ENCODE measurements at regions of chr1 and their contacts with region 1.

Region 1: DNA sequence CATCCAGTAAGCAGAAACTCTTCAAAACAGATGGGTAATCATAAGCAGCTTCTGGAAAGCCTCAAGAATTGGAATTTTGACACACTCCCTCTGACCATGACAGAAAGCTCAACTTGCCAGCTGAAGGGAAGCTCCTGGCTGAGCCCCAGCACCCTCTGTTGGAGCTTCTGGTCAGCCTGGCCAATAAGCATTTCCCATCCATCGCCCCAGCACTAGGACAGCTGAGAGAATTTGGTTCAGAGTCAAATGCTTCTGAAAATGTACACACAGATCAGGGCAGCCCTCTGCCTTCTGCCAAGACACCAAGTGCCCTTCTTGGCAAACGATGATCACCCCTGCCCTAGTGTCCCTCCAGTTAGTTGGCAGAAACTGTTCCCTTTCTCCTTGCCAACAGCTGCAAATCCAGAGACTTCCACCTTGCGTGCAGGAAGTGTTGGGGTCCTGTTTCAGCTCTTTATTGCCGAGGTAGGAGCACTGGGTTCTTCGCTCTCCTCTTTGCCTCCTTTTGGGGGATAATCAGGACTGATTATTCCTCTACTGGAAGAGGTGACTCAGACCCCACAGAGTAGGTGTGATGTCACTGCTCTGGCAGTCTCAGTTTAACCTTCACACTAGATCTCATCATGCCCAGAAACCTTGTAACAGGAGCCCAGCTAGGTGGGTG is 11.9 kb downstream of the PIGV start:
- DNase-seq: peak; percentile 30
- H3K4me3 Mint-ChIP-seq: peak overlapping the region; percentile 52
- H3K27ac Mint-ChIP-seq: peak overlapping the region; percentile 89
- H3K4me1 Mint-ChIP-seq: peaks cover 55% of the 10 kb centered on the region
- H3K27me3 Mint-ChIP-seq: no peaks in the 10 kb centered on the region

Region 2: DNA sequence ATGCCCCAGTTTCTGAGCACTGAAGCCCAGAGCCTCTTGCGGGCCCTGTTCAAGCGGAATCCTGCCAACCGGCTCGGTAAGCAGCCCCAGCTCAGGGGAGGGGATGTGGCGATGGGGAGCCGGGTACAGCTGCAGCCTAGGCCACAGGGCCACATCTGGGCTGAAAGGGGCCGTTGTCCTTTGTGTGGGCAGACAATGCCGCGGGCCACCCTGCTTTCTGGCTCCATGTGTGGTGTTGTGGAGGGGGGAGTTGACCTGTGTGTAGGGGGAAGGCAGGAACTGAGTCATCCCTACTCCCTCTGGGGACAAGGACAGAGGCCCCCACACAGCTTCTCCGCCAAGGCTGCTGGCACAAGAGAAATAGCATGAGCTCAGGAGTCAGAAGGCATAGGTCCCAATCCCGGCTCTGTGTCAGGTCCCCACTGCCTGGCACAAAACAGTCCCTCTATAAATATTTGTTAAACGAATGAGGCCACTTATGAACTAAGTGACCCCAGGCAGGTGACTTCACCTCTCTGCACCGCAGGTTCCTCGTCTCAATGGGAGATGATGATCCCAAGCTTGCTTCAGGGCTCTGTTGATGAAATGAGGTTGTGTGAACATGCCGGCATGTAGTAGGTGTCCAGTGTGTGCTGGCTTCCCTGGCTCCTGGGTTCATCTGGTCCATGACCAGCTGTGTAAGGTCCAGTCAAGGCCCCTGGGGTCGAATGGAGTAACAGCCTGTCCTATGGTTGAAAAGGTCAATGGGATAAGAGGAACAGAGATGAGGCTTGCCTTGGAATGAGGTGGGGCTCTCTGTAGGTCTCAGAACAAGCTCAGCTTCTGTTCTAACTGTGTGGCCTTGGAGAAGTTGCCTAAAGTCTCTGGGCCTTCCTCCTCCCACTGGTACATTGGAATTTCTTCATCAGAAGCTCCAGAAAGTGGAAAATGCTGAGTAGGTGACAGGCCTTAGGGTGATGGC is 243.8 kb before region 1 on chr1:
- CTCF ChIA-PET with region 1: no interaction called
- POLR2A ChIA-PET with region 1: no interaction called
- DNase-seq: no peak
- H3K4me3 Mint-ChIP-seq: no peak overlapping the region
- H3K27ac Mint-ChIP-seq: peak overlapping the region; percentile 55
- H3K4me1 Mint-ChIP-seq: peaks cover 45% of the 10 kb centered on the region
- H3K27me3 Mint-ChIP-seq: no peaks in the 10 kb centered on the region

Region 3: DNA sequence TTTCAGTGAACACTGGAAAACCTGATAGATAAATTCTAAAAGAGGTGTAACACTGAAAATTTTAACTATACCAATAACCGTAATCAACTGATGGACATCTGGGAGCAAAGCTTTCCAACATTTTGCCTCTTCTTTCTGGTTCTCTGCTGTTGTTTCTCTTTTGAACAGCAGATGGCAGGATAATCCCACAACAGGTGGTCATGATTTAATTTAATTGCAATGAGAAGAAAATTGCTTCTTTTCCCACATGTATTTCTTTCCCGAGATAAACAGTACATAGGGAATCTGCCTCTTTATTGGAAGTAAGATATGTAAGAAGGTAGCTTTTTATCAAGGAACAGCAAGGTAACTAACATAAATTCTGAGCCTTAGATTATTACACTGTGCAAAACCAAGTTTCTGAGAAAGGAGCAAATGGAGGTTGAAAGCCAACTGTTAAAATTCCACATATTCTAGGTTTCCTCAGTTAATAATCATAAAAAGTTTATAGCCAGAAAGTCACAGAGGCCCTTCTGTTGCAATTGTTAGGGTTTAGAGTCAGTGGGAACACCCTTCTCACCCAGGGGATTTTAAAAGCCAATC is 197.1 kb before region 1 on chr1:
- CTCF ChIA-PET with region 1: interaction called, 10 read pairs
- POLR2A ChIA-PET with region 1: no interaction called
- DNase-seq: peak; percentile 38
- H3K4me3 Mint-ChIP-seq: no peak overlapping the region
- H3K27ac Mint-ChIP-seq: no peak overlapping the region
- H3K4me1 Mint-ChIP-seq: peaks cover 11% of the 10 kb centered on the region
- H3K27me3 Mint-ChIP-seq: peaks cover 20% of the 10 kb centered on the region

Region 4: DNA sequence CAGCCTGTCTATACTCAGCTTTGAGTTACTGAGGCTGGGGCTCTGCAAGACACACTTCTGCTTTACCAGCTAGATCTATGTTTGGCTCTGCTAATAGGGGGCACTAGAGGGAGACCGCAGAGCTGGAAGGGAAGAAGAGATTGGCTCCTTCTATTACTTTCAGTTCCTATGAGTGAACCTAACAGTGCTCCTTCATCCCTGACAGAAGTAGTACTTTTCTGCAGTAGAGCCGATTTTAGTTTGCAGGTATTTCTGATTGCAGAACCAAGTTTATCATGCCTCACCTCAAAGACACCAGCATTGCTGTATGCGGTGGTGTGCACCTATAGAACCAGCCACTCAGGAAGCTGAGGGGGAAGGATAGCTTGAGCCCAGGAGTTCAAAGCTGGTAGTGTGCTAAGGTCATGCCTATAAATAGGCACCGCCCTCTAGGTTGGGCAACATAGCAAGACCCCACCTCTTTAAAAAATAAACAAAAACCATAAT is 21.2 kb after region 1 on chr1:
- CTCF ChIA-PET with region 1: interaction called, 14 read pairs
- POLR2A ChIA-PET with region 1: interaction called, 9 read pairs
- DNase-seq: peak; percentile 31
- H3K4me3 Mint-ChIP-seq: peak overlapping the region; percentile 35
- H3K27ac Mint-ChIP-seq: peak overlapping the region; percentile 32
- H3K4me1 Mint-ChIP-seq: peaks cover 23% of the 10 kb centered on the region
- H3K27me3 Mint-ChIP-seq: no peaks in the 10 kb centered on the region

Region 5: DNA sequence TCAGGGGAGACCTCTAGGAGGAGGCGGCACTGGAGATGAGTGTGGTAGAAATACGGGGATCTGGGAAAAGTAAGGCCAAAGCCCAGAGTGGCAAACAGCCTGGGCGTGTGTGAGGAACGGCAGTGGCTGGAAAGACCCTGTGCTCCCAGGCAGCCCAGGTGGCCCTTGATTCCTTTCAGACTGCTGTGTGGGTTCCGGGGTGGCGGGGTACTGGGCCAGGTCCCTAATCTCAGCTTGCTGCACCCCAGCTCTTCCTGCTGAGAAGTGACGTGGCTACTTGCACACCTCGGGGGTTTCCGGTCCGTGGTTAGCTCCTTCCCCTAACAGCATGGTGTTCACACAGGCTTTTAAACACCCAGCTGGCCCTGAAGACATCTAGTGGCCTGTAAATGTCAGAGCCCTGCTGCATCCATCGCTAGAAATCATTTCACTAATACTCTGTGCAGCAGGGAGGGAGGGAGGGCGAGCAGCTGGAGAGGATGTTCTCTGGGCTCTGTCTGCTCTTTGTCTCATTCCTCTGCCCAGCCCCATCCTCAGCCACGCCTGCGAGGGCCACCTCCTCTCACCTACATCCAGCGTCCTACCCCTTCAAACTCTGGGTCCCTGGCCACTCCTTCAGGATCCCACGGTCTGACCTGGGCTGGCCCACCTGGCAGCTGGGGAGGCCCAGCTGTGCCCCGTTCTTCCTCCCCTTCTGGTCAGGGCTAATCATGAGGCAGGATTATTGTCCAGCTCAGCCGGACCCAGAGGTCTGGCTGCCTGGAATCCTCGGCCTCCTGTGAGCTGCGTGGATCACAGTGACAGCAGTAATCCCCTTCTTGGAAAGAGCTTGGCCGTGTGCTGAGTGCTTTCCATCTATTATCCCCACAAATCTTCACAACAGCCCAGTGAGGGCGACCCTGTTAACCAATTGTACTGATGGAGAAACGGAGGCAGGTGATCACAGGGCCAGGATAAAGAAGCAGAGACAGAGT is 34.1 kb after region 1 on chr1:
- CTCF ChIA-PET with region 1: interaction called, 22 read pairs
- POLR2A ChIA-PET with region 1: interaction called, 12 read pairs
- DNase-seq: peak; percentile 94
- H3K4me3 Mint-ChIP-seq: peak overlapping the region; percentile 66
- H3K27ac Mint-ChIP-seq: peak overlapping the region; percentile 99
- H3K4me1 Mint-ChIP-seq: peaks cover 80% of the 10 kb centered on the region
- H3K27me3 Mint-ChIP-seq: no peaks in the 10 kb centered on the region

Region 6: GRCh38 chr1:26889551-26890466 is 90.2 kb after region 1 on chr1 and contains the start of gene GPN2:
- CTCF ChIA-PET with region 1: interaction called, 9 read pairs
- POLR2A ChIA-PET with region 1: interaction called, 10 read pairs
- DNase-seq: peak; percentile 82
- H3K4me3 Mint-ChIP-seq: peak within 1 kb of the TSS; percentile 99
- H3K27ac Mint-ChIP-seq: peak within 1 kb of the TSS; percentile 94
- H3K4me1 Mint-ChIP-seq: peaks cover 28% of the 10 kb centered on the region
- H3K27me3 Mint-ChIP-seq: no peaks in the 10 kb centered on the region
- total RNA-seq, gene GPN2: 29.4 to 31.4 TPM

Measured in activated CD4-positive, alpha-beta memory T cell treated with anti-CD3 and anti-CD28 coated beads, Interleukin-2, amount 10 ng/mL, durations not matched to agents 7 days and 5 days (primary cell).